ENCODE measurements at regions of chr9 and their contacts with region 1.

Region 1: DNA sequence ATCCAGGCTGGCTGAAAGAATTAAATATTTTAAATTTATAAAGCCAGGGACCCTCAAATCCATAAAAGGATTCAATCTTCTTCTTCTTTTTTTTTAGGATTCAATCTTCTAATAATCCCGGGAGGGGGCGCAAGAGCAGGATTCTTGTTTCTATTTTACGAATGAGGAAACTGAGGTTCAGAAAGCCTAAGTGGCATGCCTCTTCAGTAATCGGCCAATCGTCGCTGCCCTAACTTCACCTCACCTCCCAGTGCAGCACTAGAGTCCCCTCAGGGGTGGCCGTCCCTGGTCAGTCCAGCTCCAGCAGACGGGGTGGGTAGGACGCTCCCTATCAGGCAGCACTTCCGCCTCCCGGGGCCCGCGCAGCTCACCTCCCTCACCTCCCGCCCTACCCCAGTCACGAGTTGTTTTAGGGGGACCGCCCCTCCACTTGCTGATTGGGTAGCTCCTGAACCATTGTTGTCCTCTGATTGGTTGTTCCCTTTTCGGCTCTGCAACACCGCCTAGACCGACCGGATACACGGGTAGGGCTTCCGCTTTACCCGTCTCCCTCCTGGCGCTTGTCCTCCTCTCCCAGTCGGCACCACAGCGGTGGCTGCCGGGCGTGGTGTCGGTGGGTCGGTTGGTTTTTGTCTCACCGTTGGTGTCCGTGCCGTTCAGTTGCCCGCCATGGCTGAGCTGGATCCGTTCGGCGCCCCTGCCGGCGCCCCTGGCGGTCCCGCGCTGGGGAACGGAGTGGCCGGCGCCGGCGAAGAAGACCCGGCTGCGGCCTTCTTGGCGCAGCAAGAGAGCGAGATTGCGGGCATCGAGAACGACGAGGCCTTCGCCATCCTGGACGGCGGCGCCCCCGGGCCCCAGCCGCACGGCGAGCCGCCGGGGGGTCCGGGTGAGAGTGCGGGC is at the start of gene CLTA:
- DNase-seq: peak; percentile 100
- H3K4me3 Mint-ChIP-seq: peak within 1 kb of the TSS; percentile 83
- H3K27ac Mint-ChIP-seq: peak within 1 kb of the TSS; percentile 92
- H3K4me1 Mint-ChIP-seq: peaks cover 35% of the 10 kb centered on the region
- H3K27me3 Mint-ChIP-seq: no peaks in the 10 kb centered on the region
- CTCF ChIP-seq: peak; percentile 46
- total RNA-seq, gene CLTA: 189 and 218 TPM in 2 replicates

Region 2: GRCh38 chr9:36029765-36030528 is 160.7 kb before region 1 on chr9:
- CTCF ChIA-PET with region 1: interaction called, 3 read pairs
- POLR2A ChIA-PET with region 1: interaction called, 11 read pairs
- intact Hi-C with region 1: no loop called
- DNase-seq: peak; percentile 94
- H3K4me3 Mint-ChIP-seq: no peak overlapping the region
- H3K27ac Mint-ChIP-seq: peak overlapping the region; percentile 83
- H3K4me1 Mint-ChIP-seq: peaks cover 19% of the 10 kb centered on the region
- H3K27me3 Mint-ChIP-seq: peaks cover 19% of the 10 kb centered on the region
- CTCF ChIP-seq: no peak

Region 3: GRCh38 chr9:36074870-36075532 is 115.6 kb before region 1 on chr9:
- CTCF ChIA-PET with region 1: no interaction called
- POLR2A ChIA-PET with region 1: interaction called, 11 read pairs
- intact Hi-C with region 1: no loop called
- DNase-seq: peak; percentile 89
- H3K4me3 Mint-ChIP-seq: no peak overlapping the region
- H3K27ac Mint-ChIP-seq: peak overlapping the region; percentile 33
- H3K4me1 Mint-ChIP-seq: peaks cover 19% of the 10 kb centered on the region
- H3K27me3 Mint-ChIP-seq: no peaks in the 10 kb centered on the region
- CTCF ChIP-seq: no peak

Region 4: DNA sequence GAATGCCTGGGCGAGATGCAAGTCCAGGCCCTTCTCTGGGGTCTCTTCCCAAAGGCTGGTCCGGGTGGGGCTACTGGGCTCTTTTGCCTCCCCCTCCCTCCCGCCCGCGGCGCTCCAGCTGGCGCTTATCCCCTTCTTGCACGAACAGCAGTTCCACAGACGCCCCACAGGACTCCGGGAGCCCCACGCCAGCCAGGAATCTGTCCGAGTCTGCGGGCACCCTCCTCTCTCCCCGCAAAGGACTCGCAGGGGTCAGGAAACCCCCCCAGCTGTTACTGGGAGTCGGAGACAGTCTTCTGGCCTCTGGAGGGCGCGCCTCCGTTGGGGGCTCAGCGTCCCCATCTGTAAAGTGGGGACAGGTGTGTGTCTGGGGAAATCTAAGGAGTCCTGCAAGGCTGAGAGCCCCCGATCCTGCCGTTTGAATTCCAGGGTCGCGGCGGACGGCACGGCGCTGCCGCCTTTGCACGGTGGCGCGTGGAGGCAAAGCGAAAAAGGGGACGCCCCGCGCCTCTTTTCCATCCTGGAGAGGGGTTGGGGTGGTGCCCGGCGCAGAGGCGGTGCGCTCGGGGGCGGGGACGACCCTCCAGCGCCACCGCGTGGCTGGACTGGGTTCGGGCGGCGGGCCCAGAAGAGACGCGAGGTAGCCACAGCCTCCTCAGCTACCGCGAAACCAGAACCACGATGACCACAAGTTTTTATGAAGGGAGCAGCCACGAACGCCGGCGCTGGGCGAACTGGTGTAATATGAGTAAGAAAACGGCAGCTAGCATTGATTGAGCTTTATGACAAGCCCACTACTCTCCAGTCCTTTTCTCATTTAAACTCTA is 24.3 kb before region 1 on chr9:
- CTCF ChIA-PET with region 1: interaction called, 12 read pairs
- POLR2A ChIA-PET with region 1: interaction called, 15 read pairs
- intact Hi-C with region 1: no loop called
- DNase-seq: peak; percentile 72
- H3K4me3 Mint-ChIP-seq: peak overlapping the region; percentile 63
- H3K27ac Mint-ChIP-seq: no peak overlapping the region
- H3K4me1 Mint-ChIP-seq: peaks cover 3% of the 10 kb centered on the region
- H3K27me3 Mint-ChIP-seq: no peaks in the 10 kb centered on the region
- CTCF ChIP-seq: peak; percentile 90

Region 5: DNA sequence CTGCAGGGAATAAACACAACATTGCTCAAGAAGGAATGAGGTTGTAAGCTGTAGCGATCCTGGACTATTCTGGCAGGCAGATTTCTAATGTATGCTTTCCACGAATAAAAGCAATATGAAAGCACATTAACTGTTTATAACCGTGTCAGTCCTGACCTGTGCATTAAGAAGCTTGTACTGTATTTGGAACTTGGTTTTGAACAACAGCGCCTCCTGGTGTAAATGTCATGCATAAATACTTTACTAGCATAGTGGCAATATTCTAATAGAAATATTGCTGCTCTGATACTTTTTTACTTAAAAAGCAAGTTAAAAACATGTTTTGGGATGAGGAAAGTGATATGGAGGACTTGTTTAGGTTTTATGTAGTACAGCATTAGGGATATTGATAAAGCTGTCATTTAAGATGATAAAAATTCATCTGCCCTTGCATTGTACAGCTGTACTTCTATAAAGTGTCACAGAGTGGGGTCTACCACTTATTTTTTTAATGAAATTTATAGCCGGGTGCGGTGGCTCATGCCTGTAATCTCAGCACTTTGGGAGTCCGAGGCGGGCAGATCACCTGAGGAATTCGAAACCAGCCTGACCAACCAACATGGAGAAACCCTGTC is 138.3 kb after region 1 on chr9:
- CTCF ChIA-PET with region 1: interaction called, 11 read pairs
- POLR2A ChIA-PET with region 1: interaction called, 5 read pairs
- intact Hi-C with region 1: loop called (anchors 1 kb)
- DNase-seq: peak; percentile 79
- H3K4me3 Mint-ChIP-seq: no peak overlapping the region
- H3K27ac Mint-ChIP-seq: no peak overlapping the region
- H3K4me1 Mint-ChIP-seq: peaks cover 8% of the 10 kb centered on the region
- H3K27me3 Mint-ChIP-seq: no peaks in the 10 kb centered on the region
- CTCF ChIP-seq: peak; percentile 56

Measured in MCF 10A (cell line).